OCI-LY7 (cell line): ENCODE measurements at regions of chr14 and their contacts with region 1.

Region 1: GRCh38 chr14:55102141-55102621 is 26.9 kb upstream of the LGALS3 start:
- DNase-seq: peak; percentile 94
- H3K4me3 ChIP-seq: peak overlapping the region; percentile 34
- H3K27ac ChIP-seq: peak overlapping the region; percentile 92
- H3K4me1 ChIP-seq: peaks cover 46% of the 10 kb centered on the region
- CTCF ChIP-seq: no peak

Region 2: DNA sequence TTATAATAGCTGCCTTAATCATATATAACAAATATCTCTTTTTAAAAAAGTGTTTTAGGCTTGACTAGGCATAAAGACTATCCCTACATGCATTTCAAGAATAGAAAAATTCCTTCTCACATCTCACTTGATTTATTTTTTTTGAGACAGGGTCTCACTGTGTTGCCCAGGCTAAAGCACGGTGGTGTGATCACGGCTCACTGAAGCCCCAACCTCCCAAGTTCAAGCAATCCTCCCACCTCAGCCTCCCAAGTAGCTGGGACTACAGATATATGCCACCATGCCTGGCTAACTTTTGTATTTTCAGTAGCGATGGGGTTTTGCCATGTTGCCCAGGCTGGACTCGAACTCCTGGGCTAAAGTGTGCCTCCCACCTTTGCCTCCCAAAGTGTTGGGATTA is 134.7 kb before region 1 on chr14:
- CTCF ChIA-PET with region 1: no interaction called
- POLR2A ChIA-PET with region 1: no interaction called
- intact Hi-C with region 1: no loop called
- DNase-seq: no peak
- H3K4me3 ChIP-seq: no peak overlapping the region
- H3K27ac ChIP-seq: no peak overlapping the region
- H3K4me1 ChIP-seq: no peaks in the 10 kb centered on the region
- CTCF ChIP-seq: no peak

Region 3: DNA sequence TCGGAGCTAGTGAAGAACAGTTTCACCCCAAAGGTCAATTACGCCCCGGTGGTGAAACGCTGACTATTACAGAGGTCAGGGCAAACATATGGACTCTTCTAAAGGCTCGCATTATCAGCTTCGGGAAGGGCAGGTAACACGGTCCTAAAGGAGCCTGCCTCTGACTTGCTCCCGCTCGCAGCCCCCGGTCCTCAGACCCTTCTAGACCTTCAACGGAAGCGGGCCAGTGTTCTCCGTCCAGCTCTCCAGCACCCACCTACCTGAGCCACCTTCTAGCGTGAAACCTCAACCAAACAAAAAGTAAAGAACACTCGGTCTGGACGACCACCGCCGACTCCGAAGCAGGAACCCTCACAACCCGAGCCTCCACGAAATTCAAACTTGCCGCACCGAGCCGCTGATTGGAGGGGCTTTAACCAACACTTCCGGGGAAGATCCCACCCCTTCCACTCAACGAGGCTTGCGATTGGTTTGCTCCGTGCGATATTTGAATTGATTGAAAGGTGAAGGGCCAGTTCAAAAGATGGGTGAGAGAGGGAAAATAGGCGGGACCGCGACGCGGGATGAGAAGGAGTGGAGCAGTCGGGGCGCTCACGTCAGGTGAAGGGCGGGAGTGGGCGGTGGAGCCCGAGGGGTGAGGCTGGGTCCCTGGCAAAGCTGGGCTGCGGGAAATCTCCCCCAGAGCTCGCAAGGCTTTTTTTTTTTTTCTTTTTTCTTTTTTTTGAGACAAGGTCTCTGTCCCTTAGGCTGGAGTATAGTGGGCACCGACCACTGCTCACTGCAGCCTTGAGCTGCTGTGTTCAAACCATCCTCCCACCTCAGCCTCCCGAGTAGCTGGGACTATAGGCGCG is 89.2 kb after region 1 on chr14 and contains the start of gene DLGAP5:
- CTCF ChIA-PET with region 1: no interaction called
- POLR2A ChIA-PET with region 1: interaction called, 4 read pairs
- intact Hi-C with region 1: loop called (anchors 5 kb)
- DNase-seq: peak; percentile 98
- H3K4me3 ChIP-seq: peak within 1 kb of the TSS; percentile 75
- H3K27ac ChIP-seq: peak within 1 kb of the TSS; percentile 69
- H3K4me1 ChIP-seq: peaks cover 24% of the 10 kb centered on the region
- CTCF ChIP-seq: no peak
- total RNA-seq, gene DLGAP5: 57.6 and 59.2 TPM in 2 replicates

Region 4: DNA sequence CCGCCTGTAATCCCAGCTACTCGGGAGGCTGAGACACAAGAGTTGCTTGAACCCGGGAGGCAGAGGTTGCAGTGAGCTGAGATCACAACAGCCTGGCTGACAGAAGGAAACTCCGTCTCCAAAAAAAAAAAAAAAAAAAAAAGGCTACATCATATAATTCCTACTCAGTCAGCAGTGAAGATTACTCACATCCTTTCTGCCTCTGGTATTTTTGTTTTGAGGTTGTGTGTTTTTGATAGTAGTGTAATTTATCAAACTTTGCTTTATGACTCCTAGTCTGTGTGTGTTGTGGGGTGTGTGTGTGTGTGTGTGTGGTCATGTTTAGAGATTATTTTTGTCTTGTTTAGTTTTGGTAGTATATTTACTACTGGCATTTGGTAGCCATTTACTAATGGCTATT is 119.0 kb after region 1 on chr14:
- CTCF ChIA-PET with region 1: no interaction called
- POLR2A ChIA-PET with region 1: no interaction called
- intact Hi-C with region 1: no loop called
- DNase-seq: no peak
- H3K4me3 ChIP-seq: no peak overlapping the region
- H3K27ac ChIP-seq: no peak overlapping the region
- H3K4me1 ChIP-seq: no peaks in the 10 kb centered on the region
- CTCF ChIP-seq: no peak